ENCODE measurements at regions of chr13 and their contacts with region 1.

Region 1: GRCh38 chr13:21603531-21604448 is at the start of gene MICU2:
- DNase-seq: peak; percentile 91 to 98 (median 95)
- ATAC-seq: peak; percentile 93
- H3K4me3 ChIP-seq: peak within 1 kb of the TSS; percentile 88
- H3K4me3 Mint-ChIP-seq: peak within 1 kb of the TSS; percentile 97
- H3K27ac ChIP-seq: peak within 1 kb of the TSS; percentile 91 to 97
- H3K27ac Mint-ChIP-seq: peak within 1 kb of the TSS; percentile 95
- H3K4me1 ChIP-seq: peaks cover 28% of the 10 kb centered on the region
- H3K4me1 Mint-ChIP-seq: peaks cover 45% of the 10 kb centered on the region
- H3K27me3 ChIP-seq: peaks cover 0 to under 1% of the 10 kb centered on the region in 2 experiments
- H3K27me3 Mint-ChIP-seq: peaks cover 10% of the 10 kb centered on the region
- CTCF ChIP-seq: no peak
- total RNA-seq, gene MICU2: 25.4 to 28.4 TPM

Region 2: DNA sequence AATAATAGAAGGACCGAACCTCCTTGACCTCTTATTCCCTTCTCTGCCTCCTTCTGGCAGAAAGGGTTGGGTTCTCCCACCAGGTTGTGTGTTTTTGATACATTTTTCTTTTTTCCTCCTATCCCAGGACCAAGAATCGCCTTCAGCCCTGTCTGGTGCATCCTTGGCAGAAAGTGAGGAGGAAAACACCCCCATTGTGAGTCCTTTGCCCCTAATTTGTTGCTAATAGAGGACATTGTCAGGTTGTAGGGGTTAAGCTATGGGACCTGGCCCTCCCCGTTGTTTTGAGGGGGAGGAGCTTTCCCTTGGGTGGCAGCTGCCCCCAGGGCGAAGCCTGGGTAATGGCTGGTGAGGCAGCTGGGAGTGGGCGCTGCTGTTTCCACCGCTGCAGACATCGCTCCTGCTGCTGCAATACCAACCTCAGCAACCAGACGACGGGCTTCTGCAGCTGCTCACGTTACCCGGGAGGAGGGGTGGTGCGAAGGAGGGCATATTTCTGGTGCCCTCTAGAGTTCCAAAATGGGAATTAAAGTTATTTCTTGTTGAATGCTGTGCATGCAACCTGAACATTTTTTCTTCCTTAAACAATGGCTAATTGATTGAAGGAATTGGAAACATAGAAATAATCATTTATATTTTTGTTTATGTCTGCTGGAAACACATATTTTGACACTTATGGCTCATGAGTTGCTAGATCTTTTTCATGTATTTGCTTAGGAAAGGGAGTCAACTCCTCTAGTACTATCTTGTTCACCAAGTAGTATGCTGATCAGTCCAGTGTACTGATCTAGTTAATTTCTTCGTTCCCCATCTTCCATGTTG is 1643.7 kb before region 1 on chr13:
- CTCF ChIA-PET with region 1: no interaction called
- POLR2A ChIA-PET with region 1: interaction called, 3 read pairs
- intact Hi-C with region 1: loop called in 1 of 2 experiments (anchors 10 kb)
- DNase-seq: peak; percentile 75 to 96 (median 81)
- ATAC-seq: peak; percentile 55
- H3K4me3 ChIP-seq: peak overlapping the region; percentile 81
- H3K4me3 Mint-ChIP-seq: peak overlapping the region; percentile 98
- H3K27ac ChIP-seq: peak overlapping the region; percentile 81 to 93
- H3K27ac Mint-ChIP-seq: peak overlapping the region; percentile 99
- H3K4me1 ChIP-seq: peaks cover 30% of the 10 kb centered on the region
- H3K4me1 Mint-ChIP-seq: peaks cover 28% of the 10 kb centered on the region
- H3K27me3 ChIP-seq: no peaks in the 10 kb centered on the region
- H3K27me3 Mint-ChIP-seq: no peaks in the 10 kb centered on the region
- CTCF ChIP-seq: peak; percentile 87

Region 3: GRCh38 chr13:21034603-21035191 is 569.1 kb before region 1 on chr13:
- CTCF ChIA-PET with region 1: no interaction called
- POLR2A ChIA-PET with region 1: no interaction called
- intact Hi-C with region 1: no loop called
- DNase-seq: no peak
- ATAC-seq: no peak
- H3K4me3 ChIP-seq: no peak overlapping the region
- H3K4me3 Mint-ChIP-seq: no peak overlapping the region
- H3K27ac ChIP-seq: no peak overlapping the region
- H3K27ac Mint-ChIP-seq: no peak overlapping the region
- H3K4me1 ChIP-seq: peaks cover 3% of the 10 kb centered on the region
- H3K4me1 Mint-ChIP-seq: peaks cover 9% of the 10 kb centered on the region
- H3K27me3 ChIP-seq: no peaks in the 10 kb centered on the region
- H3K27me3 Mint-ChIP-seq: no peaks in the 10 kb centered on the region
- CTCF ChIP-seq: no peak

Region 4: GRCh38 chr13:21137696-21138095 is 466.1 kb before region 1 on chr13:
- CTCF ChIA-PET with region 1: no interaction called
- POLR2A ChIA-PET with region 1: no interaction called
- intact Hi-C with region 1: loop called in 1 of 2 experiments (anchors 5 kb)
- DNase-seq: peak in 1 of 14 experiments; percentile 18
- ATAC-seq: no peak
- H3K4me3 ChIP-seq: no peak overlapping the region
- H3K4me3 Mint-ChIP-seq: no peak overlapping the region
- H3K27ac ChIP-seq: no peak overlapping the region
- H3K27ac Mint-ChIP-seq: no peak overlapping the region
- H3K4me1 ChIP-seq: peaks cover 19% of the 10 kb centered on the region
- H3K4me1 Mint-ChIP-seq: peaks cover 27% of the 10 kb centered on the region
- H3K27me3 ChIP-seq: peaks cover 0 to 2% of the 10 kb centered on the region in 2 experiments
- H3K27me3 Mint-ChIP-seq: peaks cover 20% of the 10 kb centered on the region
- CTCF ChIP-seq: no peak

Region 5: DNA sequence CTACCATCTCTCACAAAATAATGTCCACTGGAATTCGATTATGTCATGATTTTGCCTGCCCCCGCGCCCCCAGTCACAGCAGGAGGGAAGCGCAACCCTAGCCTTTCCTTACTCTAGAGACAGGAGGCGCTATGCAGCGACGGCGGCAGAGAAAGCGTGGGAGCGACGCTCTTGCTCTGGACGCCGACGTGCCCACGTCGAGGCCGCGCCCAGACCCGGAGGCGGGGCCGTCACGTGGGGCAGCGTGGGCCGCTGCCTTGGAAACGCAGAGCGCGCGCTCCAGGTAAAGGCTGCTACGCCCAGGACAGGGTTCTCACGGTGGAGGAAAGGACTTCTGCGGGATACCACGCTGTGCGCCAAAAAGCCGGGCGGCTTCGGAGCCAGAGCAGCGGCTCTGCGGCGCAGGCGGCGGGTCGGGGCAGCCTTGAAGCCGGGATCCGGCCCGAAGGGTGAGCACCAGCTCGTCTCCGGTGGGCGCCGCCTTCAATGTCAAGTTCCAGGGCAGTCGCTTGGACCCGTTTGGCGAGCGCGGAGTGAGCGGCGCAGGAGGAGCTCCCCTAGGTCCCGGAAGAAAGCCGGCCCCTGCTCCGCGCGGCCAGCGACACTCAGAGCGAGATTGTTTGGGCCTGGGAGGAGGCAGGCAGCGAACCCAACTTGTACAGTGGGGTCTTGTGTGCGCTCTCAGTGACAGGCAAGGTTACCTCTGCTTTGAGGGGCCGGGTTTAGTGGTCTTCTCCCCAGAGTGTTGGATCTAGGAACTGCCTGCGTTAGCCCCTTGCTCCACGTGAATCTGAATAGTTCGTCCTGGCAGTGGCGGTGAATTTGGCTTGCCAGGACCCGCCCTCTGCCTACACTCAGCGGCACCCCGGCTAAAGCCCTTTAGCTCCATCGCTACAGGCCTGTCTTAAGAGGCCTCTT is 305.6 kb before region 1 on chr13:
- CTCF ChIA-PET with region 1: interaction called, 4 read pairs
- POLR2A ChIA-PET with region 1: interaction called, 3 read pairs
- intact Hi-C with region 1: loop called in 1 of 2 experiments (anchors 2 kb)
- DNase-seq: peak; percentile 70 to 95 (median 81)
- ATAC-seq: peak; percentile 94
- H3K4me3 ChIP-seq: peak overlapping the region; percentile 81
- H3K4me3 Mint-ChIP-seq: peak overlapping the region; percentile 90
- H3K27ac ChIP-seq: peak overlapping the region in 1 of 2 donors; percentile 53
- H3K27ac Mint-ChIP-seq: peak overlapping the region; percentile 34
- H3K4me1 ChIP-seq: peaks cover 19% of the 10 kb centered on the region
- H3K4me1 Mint-ChIP-seq: peaks cover 26% of the 10 kb centered on the region
- H3K27me3 ChIP-seq: no peaks in the 10 kb centered on the region
- H3K27me3 Mint-ChIP-seq: no peaks in the 10 kb centered on the region
- CTCF ChIP-seq: peak; percentile 95

Region 6: GRCh38 chr13:21590231-21590630 is 13.6 kb before region 1 on chr13:
- CTCF ChIA-PET with region 1: no interaction called
- POLR2A ChIA-PET with region 1: interaction called, 11 read pairs
- intact Hi-C with region 1: no loop called
- DNase-seq: no peak
- ATAC-seq: no peak
- H3K4me3 ChIP-seq: no peak overlapping the region
- H3K4me3 Mint-ChIP-seq: no peak overlapping the region
- H3K27ac ChIP-seq: no peak overlapping the region
- H3K27ac Mint-ChIP-seq: no peak overlapping the region
- H3K4me1 ChIP-seq: peaks cover 2% of the 10 kb centered on the region
- H3K4me1 Mint-ChIP-seq: peaks cover 93% of the 10 kb centered on the region
- H3K27me3 ChIP-seq: no peaks in the 10 kb centered on the region
- H3K27me3 Mint-ChIP-seq: no peaks in the 10 kb centered on the region
- CTCF ChIP-seq: no peak

Region 7: DNA sequence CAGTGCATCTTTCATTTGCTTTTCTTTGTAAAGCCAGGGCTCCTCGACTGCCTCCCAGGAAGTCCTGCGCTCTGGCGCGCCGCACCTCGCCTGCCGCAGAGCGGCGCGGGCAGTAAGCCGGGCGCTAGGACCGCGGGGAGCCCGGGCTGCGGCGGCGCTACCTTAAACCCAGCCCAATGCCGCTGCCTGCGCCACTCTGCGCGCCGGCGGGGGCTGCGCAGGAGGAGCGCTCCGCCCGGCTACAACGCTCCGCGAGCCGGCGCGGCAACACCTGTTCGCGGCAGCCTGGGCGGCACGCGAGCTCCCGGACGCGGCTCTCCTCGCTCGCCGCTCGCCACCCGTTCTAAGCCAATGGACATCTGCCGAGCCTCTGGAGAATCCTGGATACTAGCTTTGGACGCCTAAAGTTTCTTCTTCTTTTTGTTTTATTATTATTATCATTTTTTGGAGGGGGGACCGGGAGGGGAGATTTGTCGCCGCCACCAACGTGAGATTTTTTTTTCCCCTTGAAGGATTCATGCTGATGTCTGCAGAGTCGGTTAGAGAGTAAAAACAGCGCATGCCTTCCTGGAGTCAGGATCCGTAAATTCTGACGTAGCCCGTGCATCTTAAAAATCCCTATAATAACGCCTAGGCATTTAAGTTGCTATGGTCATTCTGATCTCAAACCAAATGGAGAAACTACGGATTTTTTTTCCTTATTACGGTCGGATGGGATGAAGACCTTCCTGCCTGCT is 67.3 kb after region 1 on chr13 and contains the start of gene FGF9:
- CTCF ChIA-PET with region 1: no interaction called
- POLR2A ChIA-PET with region 1: interaction called, 72 read pairs
- intact Hi-C with region 1: loop called (anchors 2 to 5 kb)
- DNase-seq: peak; percentile 59 to 93 (median 74)
- ATAC-seq: peak; percentile 72
- H3K4me3 ChIP-seq: peak within 1 kb of the TSS; percentile 81
- H3K4me3 Mint-ChIP-seq: peak within 1 kb of the TSS; percentile 92
- H3K27ac ChIP-seq: peak within 1 kb of the TSS in 1 of 2 donors; percentile 2
- H3K27ac Mint-ChIP-seq: peak within 1 kb of the TSS; percentile 77
- H3K4me1 ChIP-seq: peaks cover 62% of the 10 kb centered on the region
- H3K4me1 Mint-ChIP-seq: peaks cover 45% of the 10 kb centered on the region
- H3K27me3 ChIP-seq: peaks cover 18 to 21% of the 10 kb centered on the region in 2 experiments
- H3K27me3 Mint-ChIP-seq: peaks cover 43% of the 10 kb centered on the region
- CTCF ChIP-seq: no peak
- total RNA-seq, gene FGF9: 2.2 to 3.4 TPM

Region 8: GRCh38 chr13:22497991-22498780 is 894.4 kb after region 1 on chr13:
- CTCF ChIA-PET with region 1: no interaction called
- POLR2A ChIA-PET with region 1: no interaction called
- intact Hi-C with region 1: no loop called
- DNase-seq: no peak
- ATAC-seq: no peak
- H3K4me3 ChIP-seq: no peak overlapping the region
- H3K4me3 Mint-ChIP-seq: no peak overlapping the region
- H3K27ac ChIP-seq: no peak overlapping the region
- H3K27ac Mint-ChIP-seq: no peak overlapping the region
- H3K4me1 ChIP-seq: no peaks in the 10 kb centered on the region
- H3K4me1 Mint-ChIP-seq: no peaks in the 10 kb centered on the region
- H3K27me3 ChIP-seq: no peaks in the 10 kb centered on the region
- H3K27me3 Mint-ChIP-seq: no peaks in the 10 kb centered on the region
- CTCF ChIP-seq: no peak

Region 9: GRCh38 chr13:23579072-23579895 is 1975.5 kb after region 1 on chr13:
- CTCF ChIA-PET with region 1: no interaction called
- POLR2A ChIA-PET with region 1: no interaction called
- intact Hi-C with region 1: loop called in 1 of 2 experiments (anchors 10 kb)
- DNase-seq: peak; percentile 82 to 95 (median 90)
- ATAC-seq: peak; percentile 94
- H3K4me3 ChIP-seq: peak overlapping the region; percentile 70
- H3K4me3 Mint-ChIP-seq: peak overlapping the region; percentile 87
- H3K27ac ChIP-seq: peak overlapping the region in 1 of 2 donors; percentile 56
- H3K27ac Mint-ChIP-seq: no peak overlapping the region
- H3K4me1 ChIP-seq: peaks cover 18% of the 10 kb centered on the region
- H3K4me1 Mint-ChIP-seq: peaks cover 22% of the 10 kb centered on the region
- H3K27me3 ChIP-seq: peaks cover 10 to 37% of the 10 kb centered on the region in 2 experiments
- H3K27me3 Mint-ChIP-seq: peaks cover 68% of the 10 kb centered on the region
- CTCF ChIP-seq: no peak